ENCODE measurements at regions of chrX and their contacts with region 1.

Region 1: GRCh38 chrX:15242899-15243555 is 26.9 kb downstream of the ASB9 start:
- DNase-seq: peak; percentile 76
- ATAC-seq: peak; percentile 59
- H3K4me3 ChIP-seq: no peak overlapping the region
- H3K27ac ChIP-seq: no peak overlapping the region
- H3K4me1 ChIP-seq: no peaks in the 10 kb centered on the region
- H3K27me3 ChIP-seq: no peaks in the 10 kb centered on the region
- CTCF ChIP-seq: peak; percentile 72

Region 2: DNA sequence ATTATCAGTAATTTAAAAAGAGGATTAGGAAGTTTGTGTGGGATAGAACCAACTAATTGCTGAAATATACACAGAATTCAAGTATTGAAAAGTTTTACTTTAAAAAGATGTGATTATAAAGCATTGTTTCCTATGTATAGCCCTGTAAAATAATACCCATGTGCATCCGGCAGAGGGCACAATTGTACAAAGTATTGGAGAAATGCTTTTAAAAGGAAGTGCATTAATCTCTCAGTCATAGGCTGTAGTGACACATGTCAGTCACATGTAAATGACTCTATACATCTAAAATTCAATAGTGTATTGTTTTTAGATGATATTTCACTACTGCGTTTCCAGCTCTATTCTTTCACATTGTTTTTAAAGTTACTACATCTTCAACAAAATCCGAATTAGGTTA is 1203.7 kb before region 1 on chrX:
- CTCF ChIA-PET with region 1: no interaction called
- POLR2A ChIA-PET with region 1: no interaction called
- intact Hi-C with region 1: loop called (anchors 5 kb)
- DNase-seq: peak; percentile 76
- ATAC-seq: peak; percentile 83
- H3K4me3 ChIP-seq: no peak overlapping the region
- H3K27ac ChIP-seq: no peak overlapping the region
- H3K4me1 ChIP-seq: no peaks in the 10 kb centered on the region
- H3K27me3 ChIP-seq: no peaks in the 10 kb centered on the region
- CTCF ChIP-seq: peak; percentile 76

Region 3: DNA sequence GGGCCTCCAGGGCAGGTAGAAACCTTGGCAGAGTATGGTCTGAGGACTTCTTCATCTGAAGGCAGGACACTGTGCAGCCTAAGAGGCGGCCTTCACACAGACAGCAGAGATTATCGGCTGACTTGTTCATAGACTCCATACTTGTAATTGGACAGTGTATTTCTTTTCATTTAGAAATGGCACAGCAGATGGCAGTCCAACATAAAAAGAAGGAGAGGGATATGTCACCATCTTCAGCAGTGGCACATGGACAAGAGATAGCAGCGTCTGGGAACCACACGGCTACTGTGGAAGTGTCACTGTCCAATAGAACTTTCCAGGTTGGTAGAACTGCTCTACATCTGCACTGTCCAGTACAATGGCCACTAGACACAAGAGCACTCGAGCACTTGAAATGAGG is 1191.6 kb before region 1 on chrX:
- CTCF ChIA-PET with region 1: no interaction called
- POLR2A ChIA-PET with region 1: no interaction called
- intact Hi-C with region 1: loop called (anchors 5 kb)
- DNase-seq: peak; percentile 46
- ATAC-seq: peak; percentile 58; the same call in 1 of the 2 replicates
- H3K4me3 ChIP-seq: no peak overlapping the region
- H3K27ac ChIP-seq: no peak overlapping the region
- H3K4me1 ChIP-seq: no peaks in the 10 kb centered on the region
- H3K27me3 ChIP-seq: peaks cover 3% of the 10 kb centered on the region
- CTCF ChIP-seq: peak; percentile 46

Region 4: GRCh38 chrX:14718403-14718802 is 524.6 kb before region 1 on chrX:
- CTCF ChIA-PET with region 1: no interaction called
- POLR2A ChIA-PET with region 1: no interaction called
- intact Hi-C with region 1: loop called (anchors 5 kb)
- DNase-seq: peak; percentile 5
- ATAC-seq: peak; percentile 35
- H3K4me3 ChIP-seq: no peak overlapping the region
- H3K27ac ChIP-seq: no peak overlapping the region
- H3K4me1 ChIP-seq: peaks cover 17% of the 10 kb centered on the region
- H3K27me3 ChIP-seq: no peaks in the 10 kb centered on the region
- CTCF ChIP-seq: no peak

Region 5: DNA sequence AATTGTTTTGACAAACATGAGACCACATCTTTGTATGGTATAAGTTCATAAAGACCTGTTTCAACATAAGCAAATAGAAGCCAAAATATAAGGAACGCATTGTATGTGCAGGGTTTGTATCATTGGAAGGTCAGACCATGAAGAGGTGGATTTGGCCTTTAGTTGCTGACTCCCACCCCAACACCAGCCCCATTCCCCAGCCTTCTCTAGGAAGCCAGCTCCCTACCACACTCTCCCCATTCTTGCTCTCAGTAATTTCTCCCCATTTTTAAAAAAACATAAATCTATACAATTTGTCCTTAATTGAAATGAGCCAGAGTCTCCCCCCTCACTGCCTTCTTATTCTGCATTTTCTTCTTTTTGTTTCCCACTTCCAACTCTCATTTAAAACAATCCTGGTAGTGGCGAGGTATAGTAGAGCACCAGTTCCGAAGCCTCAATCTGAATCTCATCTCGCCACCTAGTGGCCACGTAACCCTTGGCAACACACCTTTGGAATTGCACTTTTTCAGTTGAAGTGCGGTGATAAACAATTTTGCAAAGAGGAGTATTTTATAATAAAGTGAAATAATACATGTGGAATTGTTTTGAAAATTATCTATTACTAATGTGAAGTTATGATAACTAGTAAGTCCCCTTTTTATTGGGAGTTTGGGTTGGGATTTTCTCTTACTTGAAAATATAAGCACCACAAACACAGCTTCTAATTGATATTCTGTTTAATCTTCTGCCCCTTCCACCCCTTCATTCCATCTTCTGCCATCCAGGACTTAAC is 99.8 kb before region 1 on chrX:
- CTCF ChIA-PET with region 1: interaction called, 10 read pairs
- POLR2A ChIA-PET with region 1: no interaction called
- intact Hi-C with region 1: loop called (anchors 1 kb)
- DNase-seq: peak; percentile 75
- ATAC-seq: peak; percentile 88
- H3K4me3 ChIP-seq: no peak overlapping the region
- H3K27ac ChIP-seq: no peak overlapping the region
- H3K4me1 ChIP-seq: no peaks in the 10 kb centered on the region
- H3K27me3 ChIP-seq: no peaks in the 10 kb centered on the region
- CTCF ChIP-seq: peak; percentile 90

Measured in PC-3 (cell line).